Activated CD4-positive, alpha-beta T cell treated with anti-CD3 and anti-CD28 coated beads for 36 hours (primary cell): ENCODE measurements at regions of chr6 and their contacts with region 1.

Region 1: DNA sequence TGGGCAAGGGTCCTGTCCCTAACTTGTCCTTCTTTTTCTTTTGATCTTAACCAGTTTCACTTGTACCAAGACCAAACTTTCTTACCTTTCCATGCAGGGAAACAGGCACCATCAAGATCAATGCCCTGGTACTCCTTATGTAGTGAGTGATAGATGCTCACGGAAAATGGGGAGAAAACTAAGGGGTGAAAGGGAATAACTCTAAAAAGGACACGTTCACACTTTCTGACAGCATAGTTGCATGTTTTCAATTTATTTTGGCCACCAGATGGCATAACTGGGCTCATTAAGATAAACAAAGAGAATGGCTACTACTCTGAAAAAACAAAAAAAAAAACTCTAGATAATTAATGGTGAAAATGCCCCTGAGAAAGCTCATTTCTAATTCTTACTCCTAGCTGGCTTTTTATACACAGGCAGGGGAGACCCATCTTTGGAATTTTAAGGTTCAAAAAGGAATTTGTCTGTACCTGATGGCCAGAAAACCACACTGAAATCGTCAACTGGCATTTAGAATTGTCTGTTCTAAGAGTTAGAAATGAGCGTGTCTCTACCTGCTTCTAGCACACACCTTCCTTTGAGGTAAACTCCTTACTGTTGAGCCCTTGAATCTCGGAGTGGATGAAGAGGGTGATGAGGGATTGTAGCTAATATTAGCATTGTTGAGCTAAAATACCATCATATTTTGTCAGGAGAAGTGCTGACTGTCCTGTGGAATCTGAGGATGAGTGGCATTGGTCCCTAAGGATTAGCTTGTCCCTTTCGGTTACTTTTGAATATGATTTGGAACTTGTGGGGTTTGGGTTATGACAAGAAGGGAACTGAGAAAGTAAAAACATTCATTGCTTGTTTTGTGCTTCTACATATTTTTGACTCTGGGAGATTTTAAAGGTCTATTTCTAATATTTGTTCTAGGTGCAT is 62.2 kb upstream of the DDR1 start:
- DNase-seq: no peak
- ATAC-seq: no peak
- H3K4me3 Mint-ChIP-seq: no peak overlapping the region
- H3K27ac Mint-ChIP-seq: peak overlapping the region; percentile 70
- H3K4me1 Mint-ChIP-seq: peaks cover 74% of the 10 kb centered on the region
- H3K27me3 Mint-ChIP-seq: no peaks in the 10 kb centered on the region

Region 2: GRCh38 chr6:29723262-29723665 is 1098.9 kb before region 1 on chr6 and contains the start of gene HLA-F:
- CTCF ChIA-PET with region 1: no interaction called
- POLR2A ChIA-PET with region 1: no interaction called
- intact Hi-C with region 1: no loop called
- DNase-seq: peak; percentile 88
- ATAC-seq: peak; percentile 89
- H3K4me3 Mint-ChIP-seq: peak within 1 kb of the TSS; percentile 92
- H3K27ac Mint-ChIP-seq: peak within 1 kb of the TSS; percentile 94
- H3K4me1 Mint-ChIP-seq: peaks cover 49% of the 10 kb centered on the region
- H3K27me3 Mint-ChIP-seq: no peaks in the 10 kb centered on the region
- total RNA-seq, gene HLA-F: 216 to 229 TPM

Region 3: GRCh38 chr6:30590509-30590908 is 231.6 kb before region 1 on chr6:
- CTCF ChIA-PET with region 1: no interaction called
- POLR2A ChIA-PET with region 1: no interaction called
- intact Hi-C with region 1: no loop called
- DNase-seq: no peak
- ATAC-seq: no peak
- H3K4me3 Mint-ChIP-seq: no peak overlapping the region
- H3K27ac Mint-ChIP-seq: peak overlapping the region; percentile 59
- H3K4me1 Mint-ChIP-seq: no peaks in the 10 kb centered on the region
- H3K27me3 Mint-ChIP-seq: no peaks in the 10 kb centered on the region

Region 4: GRCh38 chr6:30686908-30687658 is 135.0 kb before region 1 on chr6:
- CTCF ChIA-PET with region 1: interaction called, 3 read pairs
- POLR2A ChIA-PET with region 1: interaction called, 3 read pairs
- intact Hi-C with region 1: loop called in 1 of 2 experiments (anchors 2 kb)
- DNase-seq: peak; percentile 90
- ATAC-seq: peak; percentile 20
- H3K4me3 Mint-ChIP-seq: peak overlapping the region; percentile 100
- H3K27ac Mint-ChIP-seq: peak overlapping the region; percentile 89
- H3K4me1 Mint-ChIP-seq: peaks cover 42% of the 10 kb centered on the region
- H3K27me3 Mint-ChIP-seq: no peaks in the 10 kb centered on the region

Region 5: DNA sequence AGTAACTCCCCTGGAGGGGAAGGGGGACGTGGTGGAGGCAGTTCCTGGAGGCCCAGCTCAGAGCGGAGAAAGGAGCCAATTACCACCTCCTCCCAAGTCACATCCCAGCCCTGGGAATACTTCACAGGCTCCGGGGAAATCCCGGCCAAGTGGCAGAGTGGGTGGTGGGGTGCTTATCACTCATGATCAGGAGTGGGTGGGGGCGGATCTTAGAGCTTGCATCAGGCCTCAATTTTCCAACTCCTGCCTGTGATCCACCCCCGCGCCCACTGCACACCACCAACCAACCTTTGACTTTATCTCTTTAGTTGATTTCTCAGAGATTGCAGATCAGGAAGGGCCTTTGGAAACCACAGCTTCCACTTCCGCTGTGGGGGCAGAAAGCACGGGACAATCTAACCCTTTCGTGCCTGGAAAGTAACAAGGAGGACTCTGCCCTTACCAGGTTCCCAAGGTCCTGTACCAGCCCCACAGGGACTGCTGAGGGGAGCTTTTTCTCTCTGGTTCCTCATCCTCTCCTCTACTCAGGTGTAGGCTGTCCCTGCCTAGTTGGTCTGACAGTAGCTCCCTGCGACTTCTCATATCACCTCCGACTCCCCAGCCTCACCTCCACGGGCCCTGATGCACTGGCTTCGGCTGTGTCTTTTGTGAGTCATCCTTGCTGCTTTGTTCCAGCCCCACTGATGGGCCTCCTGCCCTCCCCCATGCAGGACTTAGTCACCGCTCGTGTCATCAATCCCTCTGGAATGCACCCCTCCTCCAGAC is 52.9 kb before region 1 on chr6:
- CTCF ChIA-PET with region 1: interaction called, 9 read pairs
- POLR2A ChIA-PET with region 1: interaction called, 12 read pairs
- intact Hi-C with region 1: loop called in 1 of 2 experiments (anchors 1 kb)
- DNase-seq: peak; percentile 90
- ATAC-seq: peak; percentile 75
- H3K4me3 Mint-ChIP-seq: peak overlapping the region; percentile 63
- H3K27ac Mint-ChIP-seq: peak overlapping the region; percentile 98
- H3K4me1 Mint-ChIP-seq: peaks cover 86% of the 10 kb centered on the region
- H3K27me3 Mint-ChIP-seq: no peaks in the 10 kb centered on the region

Region 6: DNA sequence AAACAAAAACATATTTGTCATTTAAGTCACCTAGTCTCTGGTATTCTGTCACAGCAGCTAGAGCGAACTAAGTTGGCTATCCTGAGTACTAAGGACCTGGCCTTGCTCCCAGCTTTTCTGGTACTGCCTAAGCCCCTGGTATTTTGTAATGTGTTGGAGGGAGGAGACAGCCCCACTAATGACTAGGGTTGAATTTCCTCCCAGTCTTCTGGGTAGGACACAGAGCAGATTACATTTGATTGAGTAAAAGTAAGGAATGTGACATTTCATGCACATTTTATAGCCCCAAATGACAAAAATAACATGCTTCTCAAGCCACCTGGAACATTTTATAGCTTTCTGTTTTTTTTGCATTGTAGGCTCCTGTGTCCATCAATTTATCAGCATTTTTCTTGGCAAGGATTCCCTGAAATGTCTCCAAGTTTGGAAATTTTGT is 14.3 kb after region 1 on chr6:
- CTCF ChIA-PET with region 1: interaction called, 17 read pairs
- POLR2A ChIA-PET with region 1: no interaction called
- intact Hi-C with region 1: no loop called
- DNase-seq: no peak
- ATAC-seq: no peak
- H3K4me3 Mint-ChIP-seq: no peak overlapping the region
- H3K27ac Mint-ChIP-seq: no peak overlapping the region
- H3K4me1 Mint-ChIP-seq: peaks cover 14% of the 10 kb centered on the region
- H3K27me3 Mint-ChIP-seq: no peaks in the 10 kb centered on the region

Region 7: DNA sequence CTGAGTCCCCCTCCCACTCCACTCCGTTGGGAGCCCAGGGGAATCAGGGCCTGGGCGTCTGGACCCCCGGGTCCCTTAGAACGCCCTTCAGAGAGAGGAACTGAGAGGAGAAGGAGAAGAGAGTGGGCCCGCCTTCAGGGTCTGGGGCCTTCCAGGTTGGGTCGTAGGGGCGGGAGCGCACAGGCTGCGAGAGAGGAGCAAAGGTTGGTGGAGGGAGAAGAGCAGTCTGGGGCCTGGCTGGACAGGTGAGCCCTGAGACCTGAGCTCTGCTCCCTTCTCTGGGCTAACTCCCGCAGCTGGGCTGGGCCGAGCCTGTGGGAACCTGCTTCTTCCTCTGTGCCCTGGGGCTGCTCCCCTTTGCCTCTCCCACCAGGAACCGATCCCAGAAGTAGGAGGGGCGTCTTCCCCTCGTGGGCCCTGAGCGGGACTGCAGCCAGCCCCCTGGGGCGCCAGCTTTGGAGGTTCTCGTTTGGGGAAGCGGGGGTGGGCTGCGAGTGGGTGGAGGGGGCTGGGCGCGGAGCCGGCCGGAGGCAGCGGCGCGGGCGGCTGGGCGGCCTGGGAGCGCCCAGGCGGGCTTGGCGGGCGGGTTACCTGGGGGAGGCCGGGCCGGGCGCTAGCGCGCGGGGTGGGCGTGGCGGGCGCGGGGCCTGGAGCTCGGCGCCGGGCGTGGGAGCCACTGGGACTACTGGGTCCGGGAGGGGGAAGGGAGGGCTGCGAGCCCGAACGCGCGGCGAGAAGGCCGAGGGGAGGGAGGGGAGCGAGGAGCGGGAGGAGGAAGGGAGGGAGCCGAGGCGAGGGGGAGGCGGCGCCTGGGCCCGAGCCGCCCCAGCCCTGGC is 61.8 kb after region 1 on chr6 and contains the start of gene DDR1:
- CTCF ChIA-PET with region 1: interaction called, 14 read pairs
- POLR2A ChIA-PET with region 1: no interaction called
- intact Hi-C with region 1: no loop called
- DNase-seq: peak; percentile 67
- ATAC-seq: peak; percentile 68
- H3K4me3 Mint-ChIP-seq: peak within 1 kb of the TSS; percentile 71
- H3K27ac Mint-ChIP-seq: peak within 1 kb of the TSS; percentile 73
- H3K4me1 Mint-ChIP-seq: peaks cover 30% of the 10 kb centered on the region
- H3K27me3 Mint-ChIP-seq: no peaks in the 10 kb centered on the region
- total RNA-seq, gene DDR1: 9.5 to 12.6 TPM

Region 8: DNA sequence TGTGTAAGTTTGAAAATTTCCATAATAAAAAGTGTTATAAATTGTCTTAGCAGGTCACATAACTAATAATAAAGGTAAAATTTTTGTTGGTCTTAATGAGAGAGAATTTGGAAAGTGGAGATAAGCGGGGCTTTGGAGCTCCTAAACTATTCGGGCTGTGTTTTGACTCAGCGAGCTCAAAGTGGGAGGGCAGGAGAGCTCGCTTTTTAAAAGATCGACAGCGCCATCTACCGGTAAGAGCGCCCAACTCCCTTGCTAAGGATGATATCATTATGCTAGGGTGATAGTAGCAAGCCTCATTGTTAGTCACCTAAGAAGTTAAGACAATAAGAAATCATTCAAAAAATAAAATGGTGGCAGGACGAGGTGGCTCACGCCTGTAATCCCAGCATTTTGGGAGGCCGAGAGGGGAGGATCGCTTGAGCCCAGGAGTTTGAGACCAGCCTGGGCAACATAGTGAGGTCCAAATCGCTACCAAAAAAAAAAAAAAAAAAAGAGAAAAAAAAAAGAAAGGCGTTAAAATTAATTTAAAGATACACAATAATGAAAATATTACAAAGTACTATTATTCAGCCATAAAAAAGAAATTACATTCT is 265.5 kb after region 1 on chr6:
- CTCF ChIA-PET with region 1: interaction called, 30 read pairs
- POLR2A ChIA-PET with region 1: no interaction called
- intact Hi-C with region 1: no loop called
- DNase-seq: peak; percentile 94
- ATAC-seq: peak; percentile 96
- H3K4me3 Mint-ChIP-seq: no peak overlapping the region
- H3K27ac Mint-ChIP-seq: no peak overlapping the region
- H3K4me1 Mint-ChIP-seq: peaks cover 13% of the 10 kb centered on the region
- H3K27me3 Mint-ChIP-seq: no peaks in the 10 kb centered on the region